Mucosa of descending colon (tissue), 3 donors: ENCODE measurements at regions of chr19 and their contacts with region 1.

Region 1: GRCh38 chr19:4791170-4792018 is at the start of gene FEM1A:
- DNase-seq: peak; percentile 98 to 100 (median 99)
- ATAC-seq: peak; percentile 97
- H3K4me3 ChIP-seq: peak within 1 kb of the TSS; percentile 83
- H3K4me1 ChIP-seq: peaks cover 17% of the 10 kb centered on the region
- CTCF ChIP-seq: peak; percentile 98
- total RNA-seq, gene FEM1A: 10.5 to 15.2 (median 11.4) TPM

Region 2: DNA sequence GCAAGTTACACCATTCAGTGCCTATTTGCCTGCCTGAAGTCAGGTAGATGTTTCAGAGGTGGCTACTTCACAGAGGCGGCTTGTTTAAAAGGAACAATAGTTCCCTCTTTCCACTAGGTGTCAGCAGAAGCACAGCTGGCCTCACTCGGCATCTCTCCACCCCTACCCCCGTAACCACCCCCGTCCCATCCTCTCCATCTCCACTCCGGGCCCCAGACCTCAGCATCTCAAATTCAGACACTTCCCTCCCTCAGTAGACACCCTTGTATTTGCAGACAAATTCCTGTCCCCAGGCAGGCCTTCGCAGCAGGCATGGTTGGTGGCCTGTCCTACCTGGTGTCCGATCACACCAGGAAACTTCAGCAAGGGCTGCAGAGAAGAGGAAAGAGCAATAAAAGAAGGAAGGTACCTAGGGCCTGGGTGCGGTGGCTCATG is 58.7 kb before region 1 on chr19:
- intact Hi-C with region 1: loop called in 1 of 2 experiments (anchors 2 kb)
- DNase-seq: peak in 2 of 3 donors; percentile 37 to 53
- ATAC-seq: peak; percentile 95
- H3K4me3 ChIP-seq: no peak overlapping the region
- H3K4me1 ChIP-seq: no peaks in the 10 kb centered on the region
- CTCF ChIP-seq: no peak